Heart left ventricle (tissue), 16 donors: ENCODE measurements at regions of chr12 and their contacts with region 1.

Region 1: DNA sequence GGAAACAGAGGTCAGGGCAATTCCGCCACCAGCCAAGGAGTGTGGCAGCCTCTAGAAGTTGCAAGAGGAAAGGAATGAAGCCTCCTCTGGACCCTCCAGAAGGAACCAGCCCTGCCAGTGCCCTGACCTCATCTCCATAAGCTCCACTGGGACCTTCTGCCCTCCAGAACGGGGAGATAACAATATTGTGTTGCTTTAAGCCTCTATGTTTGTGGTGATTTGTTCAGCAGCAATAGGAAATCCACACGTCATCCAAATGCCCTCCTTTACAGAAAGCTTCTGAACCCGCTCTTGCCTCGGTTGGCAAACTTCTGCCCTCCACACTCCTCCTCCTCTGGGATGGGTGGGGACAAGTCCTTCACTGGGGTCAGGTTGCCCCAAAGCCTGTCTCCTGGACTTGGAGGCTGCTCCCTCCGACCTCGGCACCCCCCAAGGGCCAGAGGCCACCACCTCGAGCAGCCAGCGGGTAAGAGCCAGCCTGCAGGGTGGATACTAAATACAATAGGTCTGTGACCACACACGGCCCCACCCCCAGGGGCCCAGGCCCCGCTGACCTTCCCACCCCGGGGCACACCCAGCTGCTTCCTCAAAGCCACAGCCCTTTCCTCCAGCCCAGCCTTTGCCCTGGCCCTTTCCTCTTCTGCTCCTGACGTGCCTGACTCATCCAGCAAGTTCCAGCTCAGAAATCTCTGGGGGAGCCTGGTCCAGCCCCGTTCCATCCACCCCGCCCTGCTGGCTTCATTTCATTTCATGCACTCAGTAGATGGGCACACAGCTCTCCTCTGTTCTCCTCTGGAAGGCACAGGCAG is 58.7 kb upstream of the NCOR2 start:
- DNase-seq: peak; percentile 88 to 94 (median 93)
- ATAC-seq: peak; percentile 83 to 96 (median 94)
- H3K4me3 ChIP-seq: peak overlapping the region in 1 of 12 donors; percentile 6
- H3K27ac ChIP-seq: peak overlapping the region; percentile 63 to 94 (median 86)
- H3K4me1 ChIP-seq: peaks cover 3 to 43% (median 35%) of the 10 kb centered on the region in 12 donors
- H3K27me3 ChIP-seq: no peaks in the 10 kb centered on the region
- CTCF ChIP-seq: no peak
- POLR2A ChIP-seq: peak in 1 of 2 donors; percentile 7

Region 2: DNA sequence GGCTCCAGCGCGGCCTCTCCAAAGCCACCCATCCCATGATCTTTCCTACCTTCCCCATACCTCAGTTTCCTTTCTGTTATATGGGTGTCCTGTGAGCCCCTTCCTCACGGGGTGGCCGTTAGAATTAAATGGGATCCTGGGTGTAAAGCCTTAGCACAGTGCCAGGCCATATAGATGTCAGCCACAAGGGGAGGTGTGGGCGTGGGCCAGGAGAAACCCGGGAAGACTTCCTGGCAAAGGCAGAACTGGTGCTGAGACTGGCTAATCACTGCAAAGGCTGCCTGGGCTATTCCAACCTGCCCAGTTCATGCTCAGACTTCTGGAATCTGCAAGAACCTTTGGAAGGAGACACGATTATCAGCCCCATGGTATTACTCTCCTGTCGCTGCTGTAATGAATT is 47.6 kb before region 1 on chr12:
- intact Hi-C with region 1: loop called in 1 of 10 experiments (anchors 10 kb)
- DNase-seq: no peak
- ATAC-seq: no peak
- H3K4me3 ChIP-seq: no peak overlapping the region
- H3K27ac ChIP-seq: no peak overlapping the region
- H3K4me1 ChIP-seq: peaks cover 0 to 11% (median 7%) of the 10 kb centered on the region in 12 donors
- H3K27me3 ChIP-seq: no peaks in the 10 kb centered on the region
- CTCF ChIP-seq: no peak
- POLR2A ChIP-seq: no peak

Region 3: GRCh38 chr12:124648710-124649384 is 22.8 kb after region 1 on chr12:
- intact Hi-C with region 1: loop called in 1 of 10 experiments (anchors 2 kb)
- DNase-seq: no peak
- ATAC-seq: no peak
- H3K4me3 ChIP-seq: no peak overlapping the region
- H3K27ac ChIP-seq: no peak overlapping the region
- H3K4me1 ChIP-seq: peaks cover 0 to 40% (median 19%) of the 10 kb centered on the region in 12 donors
- H3K27me3 ChIP-seq: no peaks in the 10 kb centered on the region
- CTCF ChIP-seq: no peak
- POLR2A ChIP-seq: no peak

Region 4: DNA sequence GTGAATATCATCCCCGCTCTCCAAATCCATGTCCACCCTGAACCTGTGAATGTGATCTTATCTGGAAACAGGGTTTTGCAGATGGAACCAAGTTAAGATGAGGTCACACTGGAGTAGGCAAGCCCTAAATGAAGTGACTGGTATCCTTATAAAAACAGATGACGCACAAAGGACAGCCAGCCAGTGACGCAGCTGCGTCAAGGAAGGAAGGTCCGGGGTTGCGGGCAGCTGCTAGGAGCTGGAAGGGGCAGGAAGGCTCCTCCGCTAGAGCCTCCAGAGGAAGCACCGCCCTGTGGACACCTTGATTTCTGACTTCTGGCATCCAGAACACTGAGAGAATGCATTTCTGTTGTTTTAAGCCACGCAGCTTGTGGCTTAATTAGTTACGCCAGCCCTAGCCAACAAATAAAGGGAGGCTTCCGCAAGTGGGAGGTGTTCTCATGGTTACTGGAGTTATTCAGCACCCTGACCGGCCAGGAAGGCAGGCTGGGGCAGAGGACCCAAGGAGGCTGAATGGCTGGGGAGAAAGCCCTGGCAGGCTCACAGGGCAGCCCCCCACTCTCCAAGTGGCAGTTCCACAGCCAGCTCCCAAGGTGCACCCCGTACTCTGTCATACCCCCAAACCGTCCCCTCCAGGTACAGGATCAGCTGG is 68.9 kb after region 1 on chr12:
- intact Hi-C with region 1: loop called in 1 of 10 experiments (anchors 5 kb)
- DNase-seq: peak in 4 of 5 donors; percentile 75 to 86 (median 82)
- ATAC-seq: peak; percentile 65 to 89 (median 79)
- H3K4me3 ChIP-seq: peak overlapping the region in 1 of 12 donors; percentile 17
- H3K27ac ChIP-seq: peak overlapping the region; percentile 11 to 89 (median 72)
- H3K4me1 ChIP-seq: peaks cover 0 to 42% (median 24%) of the 10 kb centered on the region in 12 donors
- H3K27me3 ChIP-seq: no peaks in the 10 kb centered on the region
- CTCF ChIP-seq: peak in 4 of 12 donors; percentile 12 to 23 (median 12)
- POLR2A ChIP-seq: no peak

Region 5: DNA sequence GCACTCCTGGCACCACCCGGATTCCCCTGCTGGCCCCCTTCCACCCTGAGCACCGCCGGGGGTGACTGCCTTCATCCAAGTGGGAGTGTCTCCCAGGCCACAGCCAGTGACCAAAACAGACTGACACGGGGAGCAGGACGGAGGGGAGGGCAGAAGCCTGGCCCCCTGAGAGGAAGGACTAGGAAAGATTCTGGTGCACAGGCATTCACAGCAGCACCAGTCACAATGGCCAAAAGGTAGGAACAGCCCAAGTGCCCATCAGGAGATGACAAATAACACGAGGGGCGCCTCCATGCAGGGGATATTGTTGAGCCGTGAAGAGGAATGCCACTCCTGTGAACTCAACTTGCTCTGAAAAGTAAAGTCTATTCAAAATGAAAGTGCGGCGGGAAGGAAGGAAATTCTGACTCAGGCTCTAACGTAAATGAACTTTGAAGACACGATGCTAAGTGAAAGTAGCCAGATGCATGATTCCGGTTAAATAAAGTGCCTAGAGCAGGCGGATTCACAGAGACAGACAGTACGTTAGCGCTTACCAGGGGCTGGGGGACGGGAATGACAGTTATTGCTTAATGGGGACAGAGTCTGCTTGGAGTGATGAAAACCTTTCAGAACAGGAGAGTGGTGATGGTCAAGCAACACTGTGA is 87.5 kb after region 1 on chr12:
- intact Hi-C with region 1: loop called in 1 of 10 experiments (anchors 1 kb)
- DNase-seq: peak in 4 of 5 donors; percentile 45 to 53 (median 48)
- ATAC-seq: peak; percentile 57 to 80 (median 68)
- H3K4me3 ChIP-seq: peak overlapping the region in 10 of 12 donors; percentile 7 to 47 (median 31)
- H3K27ac ChIP-seq: peak overlapping the region; percentile 81 to 97 (median 88)
- H3K4me1 ChIP-seq: peaks cover 0 to 48% (median 8%) of the 10 kb centered on the region in 12 donors
- H3K27me3 ChIP-seq: no peaks in the 10 kb centered on the region
- CTCF ChIP-seq: no peak
- POLR2A ChIP-seq: no peak

Region 6: DNA sequence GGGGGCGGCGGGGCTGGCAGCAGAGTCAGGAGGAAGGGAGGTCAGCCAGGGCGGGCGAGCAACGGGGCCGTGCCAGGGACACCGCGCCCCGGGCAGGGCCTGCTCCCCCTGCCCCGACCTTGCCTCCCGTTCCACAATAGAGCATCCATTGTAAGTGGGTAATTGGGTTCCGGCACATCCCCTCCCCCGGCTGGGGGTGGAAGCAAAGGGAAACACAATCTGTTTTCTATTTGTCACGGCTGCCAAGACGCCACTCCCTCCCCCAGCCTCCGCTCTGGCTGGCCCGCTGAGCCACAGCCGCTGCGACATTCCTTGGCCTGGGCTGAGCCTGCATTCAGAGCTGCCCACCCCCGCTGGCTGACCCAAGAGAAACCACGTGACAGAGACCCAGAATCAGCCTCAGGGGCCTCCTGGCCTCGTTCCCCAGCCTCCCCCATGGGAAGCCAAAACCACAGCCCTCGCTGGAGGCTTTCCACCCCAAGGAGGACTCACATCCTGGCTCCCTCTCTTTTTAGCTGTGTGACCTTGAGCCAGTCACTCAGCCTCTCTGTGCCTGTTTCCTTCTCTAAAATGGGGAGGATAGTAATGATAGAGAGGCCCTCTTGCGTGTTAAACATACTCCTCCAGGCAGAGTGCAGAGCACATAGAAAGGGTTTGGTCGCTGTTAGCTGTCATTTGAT is 120.0 kb after region 1 on chr12:
- intact Hi-C with region 1: loop called in 1 of 10 experiments (anchors 5 kb)
- DNase-seq: peak; percentile 94 to 96 (median 96)
- ATAC-seq: peak; percentile 92 to 97 (median 96)
- H3K4me3 ChIP-seq: peak overlapping the region in 4 of 12 donors; percentile 16 to 20 (median 18)
- H3K27ac ChIP-seq: peak overlapping the region; percentile 67 to 93 (median 85)
- H3K4me1 ChIP-seq: peaks cover 4 to 34% (median 13%) of the 10 kb centered on the region in 12 donors
- H3K27me3 ChIP-seq: no peaks in the 10 kb centered on the region
- CTCF ChIP-seq: no peak
- POLR2A ChIP-seq: peak in 1 of 2 donors; percentile 22